ENCODE measurements at regions of chr6 and their contacts with region 1.

Region 1: DNA sequence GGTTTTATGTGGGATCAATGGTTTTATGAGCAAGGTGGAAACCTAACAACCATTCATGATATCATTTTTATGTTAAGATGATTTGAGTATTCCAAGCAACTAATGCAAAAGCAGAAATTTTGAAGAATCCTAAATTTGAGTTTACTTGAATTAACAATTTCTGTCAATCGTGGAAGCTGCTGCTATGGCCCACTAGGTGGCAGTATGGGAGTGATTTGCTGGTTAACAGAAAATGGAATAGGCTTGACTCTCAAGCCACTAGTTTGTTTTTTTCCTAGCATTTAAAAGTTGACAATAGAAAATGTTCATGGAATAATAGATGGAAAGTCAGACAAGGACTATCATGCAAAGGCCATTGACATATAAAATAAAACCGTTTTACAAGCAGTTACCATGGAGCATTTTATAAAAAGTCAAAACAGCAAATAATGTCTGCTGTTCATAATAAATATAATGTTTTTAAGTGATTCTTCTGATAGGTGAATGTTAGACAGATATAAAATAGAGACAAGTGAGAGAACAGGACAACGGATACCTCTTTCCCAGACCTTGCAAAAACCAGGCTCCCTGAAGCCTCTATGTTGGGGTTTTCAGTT is 43.0 kb upstream of the TMEM200A start:
- DNase-seq: peak in 1 of 2 experiments; percentile 51
- H3K4me3 ChIP-seq: no peak overlapping the region
- H3K4me3 Mint-ChIP-seq: no peak overlapping the region
- H3K27ac Mint-ChIP-seq: no peak overlapping the region
- H3K4me1 ChIP-seq: peaks cover 8% of the 10 kb centered on the region
- H3K4me1 Mint-ChIP-seq: peaks cover 30% of the 10 kb centered on the region
- H3K27me3 ChIP-seq: no peaks in the 10 kb centered on the region
- H3K27me3 Mint-ChIP-seq: no peaks in the 10 kb centered on the region
- CTCF ChIP-seq: peak; percentile 74 to 85

Region 2: GRCh38 chr6:130293800-130294199 is 29.0 kb before region 1 on chr6:
- CTCF ChIA-PET with region 1: no interaction called
- POLR2A ChIA-PET with region 1: no interaction called
- intact Hi-C with region 1: loop called (anchors 1 kb)
- DNase-seq: peak; percentile 73 to 74
- H3K4me3 ChIP-seq: no peak overlapping the region
- H3K4me3 Mint-ChIP-seq: no peak overlapping the region
- H3K27ac Mint-ChIP-seq: peak overlapping the region; percentile 49
- H3K4me1 ChIP-seq: peaks cover 4% of the 10 kb centered on the region; the same call in 1 of the 2 replicates
- H3K4me1 Mint-ChIP-seq: peaks cover 6% of the 10 kb centered on the region
- H3K27me3 ChIP-seq: no peaks in the 10 kb centered on the region
- H3K27me3 Mint-ChIP-seq: no peaks in the 10 kb centered on the region
- CTCF ChIP-seq: peak; percentile 60 to 75

Region 3: GRCh38 chr6:130457605-130458004 is 134.8 kb after region 1 on chr6:
- CTCF ChIA-PET with region 1: no interaction called
- POLR2A ChIA-PET with region 1: no interaction called
- intact Hi-C with region 1: loop called (anchors 5 kb)
- DNase-seq: peak in 1 of 2 experiments; percentile 5
- H3K4me3 ChIP-seq: no peak overlapping the region
- H3K4me3 Mint-ChIP-seq: no peak overlapping the region
- H3K27ac Mint-ChIP-seq: no peak overlapping the region
- H3K4me1 ChIP-seq: no peaks in the 10 kb centered on the region
- H3K4me1 Mint-ChIP-seq: no peaks in the 10 kb centered on the region
- H3K27me3 ChIP-seq: no peaks in the 10 kb centered on the region
- H3K27me3 Mint-ChIP-seq: no peaks in the 10 kb centered on the region
- CTCF ChIP-seq: peak in 1 of 2 experiments; percentile 22

Region 4: GRCh38 chr6:130676077-130676772 is 353.5 kb after region 1 on chr6:
- CTCF ChIA-PET with region 1: interaction called, 3 read pairs
- POLR2A ChIA-PET with region 1: no interaction called
- intact Hi-C with region 1: loop called (anchors 1 kb)
- DNase-seq: peak in 1 of 2 experiments; percentile 14
- H3K4me3 ChIP-seq: no peak overlapping the region
- H3K4me3 Mint-ChIP-seq: no peak overlapping the region
- H3K27ac Mint-ChIP-seq: no peak overlapping the region
- H3K4me1 ChIP-seq: no peaks in the 10 kb centered on the region
- H3K4me1 Mint-ChIP-seq: no peaks in the 10 kb centered on the region
- H3K27me3 ChIP-seq: no peaks in the 10 kb centered on the region
- H3K27me3 Mint-ChIP-seq: peaks cover 2% of the 10 kb centered on the region
- CTCF ChIP-seq: peak in 1 of 2 experiments; percentile 51

Region 5: GRCh38 chr6:130697995-130698535 is 375.3 kb after region 1 on chr6:
- CTCF ChIA-PET with region 1: interaction called, 18 read pairs
- POLR2A ChIA-PET with region 1: no interaction called
- intact Hi-C with region 1: loop called (anchors 1 kb)
- DNase-seq: peak; percentile 41 to 59
- H3K4me3 ChIP-seq: no peak overlapping the region
- H3K4me3 Mint-ChIP-seq: no peak overlapping the region
- H3K27ac Mint-ChIP-seq: no peak overlapping the region
- H3K4me1 ChIP-seq: no peaks in the 10 kb centered on the region
- H3K4me1 Mint-ChIP-seq: no peaks in the 10 kb centered on the region
- H3K27me3 ChIP-seq: no peaks in the 10 kb centered on the region; the same call in 1 of the 2 replicates
- H3K27me3 Mint-ChIP-seq: peaks cover 8% of the 10 kb centered on the region
- CTCF ChIP-seq: peak; percentile 77 to 83

Region 6: GRCh38 chr6:130760006-130760405 is 437.2 kb after region 1 on chr6:
- CTCF ChIA-PET with region 1: no interaction called
- POLR2A ChIA-PET with region 1: no interaction called
- intact Hi-C with region 1: loop called (anchors 1 kb)
- DNase-seq: peak in 1 of 2 experiments; percentile 48
- H3K4me3 ChIP-seq: no peak overlapping the region
- H3K4me3 Mint-ChIP-seq: no peak overlapping the region
- H3K27ac Mint-ChIP-seq: no peak overlapping the region
- H3K4me1 ChIP-seq: no peaks in the 10 kb centered on the region
- H3K4me1 Mint-ChIP-seq: no peaks in the 10 kb centered on the region
- H3K27me3 ChIP-seq: no peaks in the 10 kb centered on the region
- H3K27me3 Mint-ChIP-seq: no peaks in the 10 kb centered on the region
- CTCF ChIP-seq: peak; percentile 42 to 68